ENCODE measurements at regions of chr6 and their contacts with region 1.

Region 1: GRCh38 chr6:50816115-50816675 is 2.5 kb upstream of the TFAP2B start:
- DNase-seq: peak; percentile 75
- H3K4me3 Mint-ChIP-seq: peak overlapping the region; percentile 80
- H3K27ac Mint-ChIP-seq: no peak overlapping the region
- H3K4me1 Mint-ChIP-seq: peaks cover 18% of the 10 kb centered on the region
- H3K27me3 Mint-ChIP-seq: peaks cover 69% of the 10 kb centered on the region
- CTCF ChIP-seq: peak; percentile 70

Region 2: DNA sequence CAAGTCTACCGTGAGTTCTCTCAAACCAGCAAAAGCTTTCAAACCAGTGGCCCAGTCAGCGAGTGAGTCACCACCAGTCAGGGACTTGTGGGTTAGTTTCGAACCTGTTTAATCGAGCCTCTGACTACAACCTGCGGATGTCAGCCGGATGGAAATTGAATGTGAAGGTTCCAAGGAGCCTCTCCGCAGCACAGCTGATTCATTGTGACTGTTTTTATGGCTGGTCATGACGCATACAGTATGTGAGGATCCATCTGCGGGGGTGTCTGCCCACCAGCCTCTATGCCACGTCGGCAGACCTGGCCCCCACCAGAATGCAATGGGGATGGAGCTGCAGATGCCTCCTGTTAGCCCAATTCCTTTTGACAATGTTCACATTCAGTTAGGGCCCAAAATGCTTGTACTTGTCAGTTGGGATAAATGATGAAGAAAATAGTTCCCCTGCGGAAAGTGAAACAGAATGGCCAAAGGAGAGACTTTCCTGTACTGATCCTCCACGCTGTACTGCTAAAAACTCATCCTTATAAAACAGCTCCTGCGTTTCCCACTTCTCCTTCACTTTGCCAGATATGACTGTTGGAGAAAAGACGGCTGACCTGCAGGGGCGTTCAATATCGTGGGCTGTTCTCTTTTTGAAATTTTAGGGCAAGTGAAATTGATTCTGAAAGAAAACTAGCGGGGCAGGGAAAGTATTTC is 209.0 kb after region 1 on chr6:
- CTCF ChIA-PET with region 1: no interaction called
- intact Hi-C with region 1: loop called (anchors 10 kb)
- DNase-seq: no peak
- H3K4me3 Mint-ChIP-seq: no peak overlapping the region
- H3K27ac Mint-ChIP-seq: no peak overlapping the region
- H3K4me1 Mint-ChIP-seq: no peaks in the 10 kb centered on the region
- H3K27me3 Mint-ChIP-seq: no peaks in the 10 kb centered on the region
- CTCF ChIP-seq: no peak

Region 3: DNA sequence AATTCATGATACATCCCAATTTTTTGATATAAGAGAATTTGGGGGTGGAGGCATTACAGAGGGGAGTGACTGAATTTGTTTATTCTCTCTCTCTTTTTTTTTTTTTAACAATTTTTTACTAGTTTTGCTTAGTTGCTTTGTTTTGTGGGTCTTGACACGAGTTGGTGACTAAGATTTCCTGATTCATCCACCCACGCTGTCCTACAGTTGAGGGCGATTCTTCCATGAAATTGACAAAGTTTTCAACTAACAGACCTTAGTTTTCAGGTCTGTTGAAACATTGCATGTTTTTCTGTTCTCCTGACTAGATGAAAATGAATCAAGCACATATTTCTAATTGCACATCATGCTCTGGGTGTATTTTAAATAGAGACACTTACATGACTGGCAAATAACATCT is 616.3 kb after region 1 on chr6:
- CTCF ChIA-PET with region 1: no interaction called
- intact Hi-C with region 1: loop called (anchors 10 kb)
- DNase-seq: no peak
- H3K4me3 Mint-ChIP-seq: no peak overlapping the region
- H3K27ac Mint-ChIP-seq: no peak overlapping the region
- H3K4me1 Mint-ChIP-seq: no peaks in the 10 kb centered on the region
- H3K27me3 Mint-ChIP-seq: no peaks in the 10 kb centered on the region
- CTCF ChIP-seq: no peak

Region 4: DNA sequence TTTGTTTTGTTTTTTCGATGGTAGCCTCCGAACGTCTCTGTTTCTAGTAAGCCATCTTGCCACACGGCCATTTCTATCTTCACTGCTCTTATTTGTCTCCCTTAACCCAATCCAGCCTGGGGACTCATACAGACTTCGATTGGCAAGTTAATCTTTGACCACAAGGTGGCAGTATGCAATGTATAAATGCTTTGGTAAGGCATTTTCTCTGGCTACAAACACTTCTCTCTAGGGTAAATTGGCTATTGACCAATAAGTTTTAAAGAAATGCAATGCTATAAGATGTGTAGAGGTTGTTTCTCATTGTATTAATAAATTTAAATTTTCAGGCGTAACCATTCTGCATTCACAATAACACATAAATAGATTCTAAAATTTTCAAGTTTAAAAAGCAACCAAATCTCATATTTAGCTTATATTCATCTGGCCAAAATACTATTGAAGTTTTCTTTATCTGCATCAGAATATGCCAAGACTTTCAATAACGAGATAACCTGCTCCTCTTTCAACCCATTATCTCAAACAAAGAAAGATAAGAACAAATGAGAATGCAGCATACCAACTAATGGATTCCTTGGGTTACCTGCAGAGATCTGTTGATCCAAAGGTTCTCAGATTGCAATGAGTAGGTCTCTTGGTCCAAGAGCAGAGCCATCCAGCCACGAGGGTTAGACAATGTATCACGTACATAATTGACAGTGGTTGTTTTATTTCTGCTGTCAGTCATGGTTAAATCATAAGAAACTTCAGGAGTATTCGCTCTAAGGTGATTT is 1039.3 kb after region 1 on chr6:
- CTCF ChIA-PET with region 1: no interaction called
- intact Hi-C with region 1: loop called (anchors 10 kb)
- DNase-seq: peak; percentile 39
- H3K4me3 Mint-ChIP-seq: no peak overlapping the region
- H3K27ac Mint-ChIP-seq: no peak overlapping the region
- H3K4me1 Mint-ChIP-seq: peaks cover 8% of the 10 kb centered on the region
- H3K27me3 Mint-ChIP-seq: no peaks in the 10 kb centered on the region
- CTCF ChIP-seq: peak; percentile 67